Activated B cell treated with CpG ODN at 0.5 μM for 24 hours (primary cell): ENCODE measurements at regions of chr10 and their contacts with region 1.

Region 1: DNA sequence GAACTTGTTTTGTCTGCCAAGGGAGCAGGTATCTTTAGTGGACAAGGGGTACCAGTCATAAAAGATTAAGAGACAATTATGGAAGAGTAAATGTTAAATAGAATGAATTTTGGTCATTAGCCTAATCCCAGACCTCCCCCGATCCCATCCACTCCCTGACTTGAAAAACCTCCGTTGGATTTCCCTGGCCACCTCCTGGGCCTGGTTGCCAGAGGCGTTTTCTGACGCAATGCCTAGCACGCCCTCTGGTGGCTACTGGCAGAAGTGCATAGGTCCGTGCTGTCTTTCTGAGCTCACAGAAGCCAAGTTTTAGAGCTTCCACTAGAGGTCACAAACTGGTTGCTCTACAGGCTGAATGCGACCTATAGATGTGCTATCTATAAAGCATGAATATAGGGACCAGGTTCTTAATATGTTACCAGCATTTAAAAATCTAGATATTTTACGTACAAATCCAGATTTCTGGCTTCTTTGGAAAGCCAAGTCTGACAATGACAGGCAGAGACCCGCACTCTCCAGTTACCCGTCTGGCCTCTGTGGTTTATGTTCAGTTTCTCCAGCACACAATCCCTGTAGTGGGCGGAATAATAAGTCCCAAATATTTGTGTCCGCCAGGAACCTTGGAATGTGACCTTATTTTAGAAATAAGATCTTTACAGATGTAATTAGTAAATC is 39.8 kb downstream of the SPOCK2 start:
- DNase-seq: peak; percentile 74
- ATAC-seq: peak; percentile 99
- H3K4me3 Mint-ChIP-seq: no peak overlapping the region
- H3K27ac Mint-ChIP-seq: peak overlapping the region; percentile 41
- H3K4me1 Mint-ChIP-seq: peaks cover 19% of the 10 kb centered on the region
- H3K27me3 Mint-ChIP-seq: no peaks in the 10 kb centered on the region
- CTCF ChIP-seq: peak; percentile 40

Region 2: DNA sequence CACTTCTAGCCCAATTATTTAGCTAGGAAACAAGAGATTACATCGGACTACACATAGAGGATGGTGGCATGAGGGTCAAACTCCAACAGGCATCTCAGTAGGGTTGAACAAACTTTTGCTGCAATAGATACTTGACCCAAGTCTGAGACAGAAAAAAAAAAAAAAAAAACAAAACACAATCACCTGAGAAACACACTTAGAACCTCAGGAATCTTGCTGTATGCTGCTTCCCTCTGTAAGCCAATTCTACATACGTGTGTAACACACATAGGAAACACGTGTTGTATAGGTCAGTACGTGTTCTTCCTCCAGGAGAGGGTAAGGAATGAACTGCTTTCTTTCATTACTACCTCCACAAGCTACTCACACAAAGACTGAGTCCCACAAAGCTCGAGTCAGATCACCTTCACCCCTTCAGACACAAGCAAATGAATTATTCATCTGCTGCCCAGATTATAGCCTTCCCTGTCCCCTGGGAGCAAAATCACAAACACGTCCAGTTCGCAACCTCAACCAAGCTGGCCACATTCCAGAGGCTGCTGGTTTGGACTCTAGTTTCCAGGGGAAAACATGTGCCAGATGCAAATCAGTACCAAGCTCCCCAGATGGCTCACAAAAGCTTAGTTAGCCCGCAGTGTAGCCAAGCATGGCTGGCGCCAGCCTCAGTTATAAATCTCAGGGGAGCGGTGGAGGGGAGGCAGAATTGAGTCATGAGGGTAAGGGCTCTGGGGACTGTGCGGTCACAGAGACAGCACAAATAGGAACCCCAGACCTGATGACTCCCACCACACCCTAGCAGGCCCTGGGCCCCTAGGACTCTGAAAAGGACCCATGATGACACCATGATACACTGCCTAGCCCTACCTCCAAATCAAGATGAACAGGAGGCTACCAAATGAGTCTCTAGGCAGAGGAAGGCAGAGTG is 212.7 kb before region 1 on chr10:
- CTCF ChIA-PET with region 1: interaction called, 6 read pairs
- POLR2A ChIA-PET with region 1: no interaction called
- intact Hi-C with region 1: loop called (anchors 2 kb)
- DNase-seq: peak; percentile 84
- ATAC-seq: peak; percentile 92
- H3K4me3 Mint-ChIP-seq: peak overlapping the region; percentile 79
- H3K27ac Mint-ChIP-seq: peak overlapping the region; percentile 95
- H3K4me1 Mint-ChIP-seq: peaks cover 88% of the 10 kb centered on the region
- H3K27me3 Mint-ChIP-seq: no peaks in the 10 kb centered on the region
- CTCF ChIP-seq: no peak

Region 3: GRCh38 chr10:71899665-71900412 is 148.7 kb before region 1 on chr10:
- CTCF ChIA-PET with region 1: interaction called, 32 read pairs
- POLR2A ChIA-PET with region 1: interaction called, 3 read pairs
- intact Hi-C with region 1: loop called (anchors 1 kb)
- DNase-seq: no peak
- ATAC-seq: peak; percentile 48
- H3K4me3 Mint-ChIP-seq: no peak overlapping the region
- H3K27ac Mint-ChIP-seq: no peak overlapping the region
- H3K4me1 Mint-ChIP-seq: peaks cover 4% of the 10 kb centered on the region
- H3K27me3 Mint-ChIP-seq: no peaks in the 10 kb centered on the region
- CTCF ChIP-seq: no peak

Region 4: GRCh38 chr10:71985542-71986250 is 62.9 kb before region 1 on chr10:
- CTCF ChIA-PET with region 1: no interaction called
- POLR2A ChIA-PET with region 1: no interaction called
- intact Hi-C with region 1: no loop called
- DNase-seq: no peak
- ATAC-seq: peak; percentile 31
- H3K4me3 Mint-ChIP-seq: no peak overlapping the region
- H3K27ac Mint-ChIP-seq: no peak overlapping the region
- H3K4me1 Mint-ChIP-seq: peaks cover 16% of the 10 kb centered on the region
- H3K27me3 Mint-ChIP-seq: peaks cover 5% of the 10 kb centered on the region
- CTCF ChIP-seq: no peak

Region 5: DNA sequence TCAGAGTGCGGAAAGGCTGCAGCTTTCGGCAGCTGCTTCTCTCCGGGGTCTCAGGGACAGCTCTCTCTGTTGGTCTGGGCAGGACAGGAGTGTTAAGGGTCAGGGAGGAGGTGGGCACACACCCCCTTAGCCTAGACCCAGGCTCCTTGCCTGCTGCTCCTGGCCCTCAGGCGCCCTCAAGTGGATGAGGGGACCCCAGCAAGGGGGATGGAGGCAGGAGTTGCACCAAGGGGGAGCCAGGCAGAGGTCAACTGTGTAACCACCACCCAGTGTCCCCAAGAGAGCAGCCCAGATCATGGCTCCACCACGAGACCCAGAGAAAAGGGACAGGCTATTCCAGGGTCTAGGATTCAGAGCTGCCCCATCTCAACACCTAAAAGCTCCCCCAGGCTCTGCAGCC is 12.9 kb after region 1 on chr10:
- CTCF ChIA-PET with region 1: interaction called, 42 read pairs
- POLR2A ChIA-PET with region 1: interaction called, 16 read pairs
- intact Hi-C with region 1: no loop called
- DNase-seq: no peak
- ATAC-seq: no peak
- H3K4me3 Mint-ChIP-seq: no peak overlapping the region
- H3K27ac Mint-ChIP-seq: peak overlapping the region; percentile 35
- H3K4me1 Mint-ChIP-seq: peaks cover 17% of the 10 kb centered on the region
- H3K27me3 Mint-ChIP-seq: no peaks in the 10 kb centered on the region
- CTCF ChIP-seq: no peak

Region 6: DNA sequence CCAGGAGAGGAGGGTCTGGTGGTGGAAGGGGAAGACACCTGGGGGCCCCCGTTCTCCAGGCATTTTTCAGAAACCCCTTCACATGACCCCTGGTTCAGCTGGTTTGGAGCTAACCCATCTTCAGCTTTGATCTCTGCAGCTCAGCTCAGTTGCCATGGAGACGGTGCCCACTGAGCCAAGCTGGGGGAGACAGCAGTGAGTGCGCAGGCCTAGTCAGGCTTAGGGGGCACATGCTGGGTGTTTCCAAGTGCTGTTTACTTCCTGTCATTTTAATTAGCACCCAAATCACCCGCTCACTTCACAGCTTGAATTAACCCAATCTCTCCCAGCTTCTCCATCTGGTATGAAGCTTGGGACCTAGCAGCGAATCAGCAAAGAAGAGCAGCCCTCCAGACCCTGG is 30.8 kb after region 1 on chr10:
- CTCF ChIA-PET with region 1: interaction called, 19 read pairs
- POLR2A ChIA-PET with region 1: no interaction called
- intact Hi-C with region 1: no loop called
- DNase-seq: peak; percentile 36
- ATAC-seq: peak; percentile 91
- H3K4me3 Mint-ChIP-seq: peak overlapping the region; percentile 61
- H3K27ac Mint-ChIP-seq: peak overlapping the region; percentile 83
- H3K4me1 Mint-ChIP-seq: peaks cover 75% of the 10 kb centered on the region
- H3K27me3 Mint-ChIP-seq: no peaks in the 10 kb centered on the region
- CTCF ChIP-seq: no peak

Region 7: GRCh38 chr10:72126184-72126871 is 77.7 kb after region 1 on chr10:
- CTCF ChIA-PET with region 1: interaction called, 22 read pairs
- POLR2A ChIA-PET with region 1: no interaction called
- intact Hi-C with region 1: no loop called
- DNase-seq: no peak
- ATAC-seq: no peak
- H3K4me3 Mint-ChIP-seq: no peak overlapping the region
- H3K27ac Mint-ChIP-seq: peak overlapping the region; percentile 42
- H3K4me1 Mint-ChIP-seq: peaks cover 2% of the 10 kb centered on the region
- H3K27me3 Mint-ChIP-seq: no peaks in the 10 kb centered on the region
- CTCF ChIP-seq: no peak

Region 8: DNA sequence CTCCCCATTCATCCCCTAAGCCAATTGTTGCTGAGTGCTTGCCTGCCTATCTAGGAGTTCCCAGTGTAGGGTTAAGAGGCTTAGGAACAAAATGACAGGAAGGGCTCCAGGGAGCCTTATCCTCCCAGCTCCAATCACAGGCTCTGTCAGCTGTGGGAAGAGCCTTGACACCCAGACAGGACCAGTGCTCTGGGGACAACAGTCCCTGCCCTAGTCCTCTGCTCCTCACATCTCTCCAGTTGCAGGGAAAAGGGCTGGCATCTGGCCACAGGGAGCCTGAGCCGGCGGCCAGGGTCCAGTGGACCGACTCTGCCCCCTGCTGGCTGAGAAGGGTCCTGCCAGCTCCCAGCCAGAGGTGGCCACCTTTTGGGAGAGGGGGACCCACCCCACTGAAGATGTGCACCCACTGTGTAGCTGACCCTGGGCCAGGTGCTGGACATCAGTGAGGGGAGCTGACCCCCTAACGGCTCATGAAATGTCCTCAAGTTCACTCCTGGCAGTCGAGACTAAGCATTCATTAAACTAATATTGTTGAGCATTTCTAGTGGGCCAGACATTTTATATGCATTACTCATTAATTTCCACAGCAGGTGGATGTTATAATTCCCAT is 288.5 kb after region 1 on chr10:
- CTCF ChIA-PET with region 1: interaction called, 59 read pairs
- POLR2A ChIA-PET with region 1: interaction called, 8 read pairs
- intact Hi-C with region 1: loop called (anchors 1 kb)
- DNase-seq: peak; percentile 72
- ATAC-seq: peak; percentile 13
- H3K4me3 Mint-ChIP-seq: no peak overlapping the region
- H3K27ac Mint-ChIP-seq: no peak overlapping the region
- H3K4me1 Mint-ChIP-seq: peaks cover 62% of the 10 kb centered on the region
- H3K27me3 Mint-ChIP-seq: no peaks in the 10 kb centered on the region
- CTCF ChIP-seq: peak; percentile 79